SK-N-SH (cell line): ENCODE measurements at regions of chr7 and their contacts with region 1.

Region 1: DNA sequence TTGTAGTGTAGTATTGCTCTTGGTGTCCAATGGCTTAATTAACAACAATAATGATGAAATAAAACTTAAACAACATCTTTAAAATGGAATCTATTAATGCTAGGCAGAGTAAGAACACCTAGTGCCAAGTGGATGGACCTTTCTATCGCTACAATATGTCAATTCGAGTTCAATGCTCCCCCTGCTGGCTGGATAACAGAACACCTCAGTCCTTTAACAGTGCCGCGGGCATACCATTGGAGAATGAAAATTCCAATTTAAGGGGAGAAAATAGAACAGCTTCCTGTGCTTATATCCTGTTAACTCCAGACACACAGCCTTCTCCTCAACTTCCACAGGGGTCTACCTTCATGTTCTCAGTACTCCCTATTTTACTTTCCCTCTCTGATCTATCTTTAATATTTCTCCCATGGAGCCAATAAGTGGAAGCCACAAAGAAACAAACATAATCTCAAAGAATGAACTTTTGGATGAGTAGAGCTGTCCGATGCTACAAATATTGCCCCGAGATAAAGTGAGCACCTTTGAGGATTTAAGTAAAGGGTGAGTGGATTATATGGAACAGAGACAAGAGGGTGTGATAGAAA is 41.4 kb downstream of the COL1A2 start:
- DNase-seq: peak; percentile 57
- H3K4me3 ChIP-seq: no peak overlapping the region; a peak in 1 of 4 replicates
- H3K27ac ChIP-seq: peak overlapping the region in 1 of 2 experiments; percentile 63; a peak in 1 of 4 replicates
- H3K4me1 ChIP-seq: peaks cover 19 to 25% of the 10 kb centered on the region in 2 experiments
- H3K27me3 ChIP-seq: no peaks in the 10 kb centered on the region
- CTCF ChIP-seq: peak; percentile 99
- EP300 ChIP-seq: no peak
- RAD21 ChIP-seq: peak; percentile 88

Region 2: GRCh38 chr7:93902777-93903423 is 533.2 kb before region 1 on chr7:
- CTCF ChIA-PET with region 1: interaction called, 12 read pairs
- POLR2A ChIA-PET with region 1: no interaction called
- DNase-seq: peak; percentile 55
- H3K4me3 ChIP-seq: no peak overlapping the region
- H3K27ac ChIP-seq: no peak overlapping the region
- H3K4me1 ChIP-seq: no peaks in the 10 kb centered on the region
- H3K27me3 ChIP-seq: no peaks in the 10 kb centered on the region
- CTCF ChIP-seq: peak; percentile 99
- EP300 ChIP-seq: no peak
- RAD21 ChIP-seq: peak; percentile 88

Region 3: GRCh38 chr7:94410413-94411187 is 25.5 kb before region 1 on chr7:
- CTCF ChIA-PET with region 1: interaction called, 11 read pairs
- POLR2A ChIA-PET with region 1: no interaction called
- DNase-seq: peak; percentile 73
- H3K4me3 ChIP-seq: no peak overlapping the region
- H3K27ac ChIP-seq: peak overlapping the region; percentile 5 to 79; a peak in 2 of 4 replicates
- H3K4me1 ChIP-seq: peaks cover 0 to 11% of the 10 kb centered on the region in 2 experiments; a peak in 3 of 4 replicates
- H3K27me3 ChIP-seq: no peaks in the 10 kb centered on the region
- CTCF ChIP-seq: no peak
- EP300 ChIP-seq: peak in 1 of 2 experiments; percentile 62; a peak in 1 of 4 replicates
- RAD21 ChIP-seq: no peak

Region 4: GRCh38 chr7:94449148-94449725 is 13.1 kb after region 1 on chr7:
- CTCF ChIA-PET with region 1: interaction called, 105 read pairs
- POLR2A ChIA-PET with region 1: no interaction called
- DNase-seq: peak; percentile 49
- H3K4me3 ChIP-seq: no peak overlapping the region
- H3K27ac ChIP-seq: no peak overlapping the region
- H3K4me1 ChIP-seq: peaks cover 0 to 11% of the 10 kb centered on the region in 2 experiments; a peak in 2 of 4 replicates
- H3K27me3 ChIP-seq: no peaks in the 10 kb centered on the region
- CTCF ChIP-seq: peak; percentile 88
- EP300 ChIP-seq: no peak
- RAD21 ChIP-seq: peak; percentile 97

Region 5: DNA sequence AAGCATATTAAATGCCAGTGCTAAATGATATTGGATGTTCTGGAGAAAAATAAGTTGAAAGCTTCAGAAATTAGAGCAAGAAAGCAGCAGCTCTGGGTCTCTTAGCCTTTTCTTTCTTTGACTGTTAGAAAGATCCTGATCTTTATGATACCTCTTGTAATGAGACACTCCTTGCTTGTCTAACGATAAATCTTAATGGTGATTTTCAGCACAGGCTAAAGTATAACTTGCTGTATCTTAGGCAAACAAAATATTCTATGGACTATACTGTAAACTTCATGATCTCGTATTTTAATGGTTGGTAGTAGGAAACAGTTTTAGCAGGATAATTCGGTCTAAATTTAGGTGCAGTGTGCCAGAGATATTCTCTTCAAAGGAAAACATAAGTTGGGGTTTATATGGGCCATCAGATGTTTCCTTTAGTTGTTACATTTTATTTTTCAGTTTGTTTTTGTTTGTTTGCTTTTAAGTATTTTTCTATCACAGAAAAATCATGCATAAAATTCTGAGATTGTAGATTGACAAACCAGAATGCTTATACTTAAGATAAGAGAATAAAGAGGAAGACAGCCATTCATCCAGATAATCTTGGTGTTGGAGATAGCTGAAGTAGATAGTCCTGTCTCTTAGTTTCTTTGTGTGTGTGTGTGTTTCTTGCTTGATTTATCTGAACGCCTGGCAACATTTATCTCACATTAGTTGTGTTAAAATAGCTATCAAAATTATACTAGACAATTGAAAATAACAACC is 78.2 kb after region 1 on chr7:
- CTCF ChIA-PET with region 1: no interaction called
- POLR2A ChIA-PET with region 1: no interaction called
- DNase-seq: no peak
- H3K4me3 ChIP-seq: no peak overlapping the region
- H3K27ac ChIP-seq: peak overlapping the region in 1 of 2 experiments; percentile 43; a peak in 2 of 4 replicates
- H3K4me1 ChIP-seq: peaks cover 20 to 46% of the 10 kb centered on the region in 2 experiments; a peak in 3 of 4 replicates
- H3K27me3 ChIP-seq: no peaks in the 10 kb centered on the region
- CTCF ChIP-seq: no peak
- EP300 ChIP-seq: no peak
- RAD21 ChIP-seq: no peak